Activated CD8-positive, alpha-beta T cell treated with anti-CD3 and anti-CD28 coated beads for 36 hours (primary cell): ENCODE measurements at regions of chr11 and their contacts with region 1.

Region 1: DNA sequence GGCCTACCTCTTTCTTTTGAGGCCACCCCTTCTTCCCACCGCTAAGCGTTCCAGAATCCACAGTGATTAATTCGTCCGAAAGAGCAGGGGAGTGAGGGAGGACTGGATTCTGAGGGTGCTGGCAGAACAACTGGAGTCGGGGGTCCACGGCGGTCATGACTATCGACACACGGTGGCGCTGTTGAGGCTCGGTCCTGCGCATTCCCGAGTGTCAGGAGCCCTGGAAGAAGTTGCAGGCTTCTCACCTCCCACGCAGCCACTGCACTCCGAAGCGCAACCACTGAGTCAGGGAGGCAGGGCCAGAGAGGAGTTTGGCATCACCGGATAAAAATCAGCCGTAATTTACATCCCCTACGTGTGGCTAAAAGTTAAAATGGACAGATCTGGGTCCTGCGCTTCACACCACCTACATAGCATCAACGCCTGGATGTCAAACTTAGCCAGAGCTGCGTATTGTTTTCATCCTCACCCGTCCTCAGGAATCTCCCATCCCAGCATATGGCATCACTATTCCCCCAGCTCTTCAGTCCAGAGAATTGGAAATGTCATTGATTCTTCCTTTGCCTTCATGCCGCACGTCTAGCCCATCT is 10.7 kb upstream of the CTSF start:
- DNase-seq: peak; percentile 90
- ATAC-seq: peak; percentile 91
- H3K4me3 Mint-ChIP-seq: no peak overlapping the region
- H3K27ac Mint-ChIP-seq: no peak overlapping the region
- H3K4me1 Mint-ChIP-seq: peaks cover 16% of the 10 kb centered on the region
- H3K27me3 Mint-ChIP-seq: no peaks in the 10 kb centered on the region
- CTCF ChIP-seq: peak; percentile 90

Region 2: GRCh38 chr11:66429983-66430602 is 149.0 kb before region 1 on chr11:
- CTCF ChIA-PET with region 1: no interaction called
- POLR2A ChIA-PET with region 1: no interaction called
- intact Hi-C with region 1: no loop called
- DNase-seq: peak; percentile 93
- ATAC-seq: peak; percentile 87
- H3K4me3 Mint-ChIP-seq: no peak overlapping the region
- H3K27ac Mint-ChIP-seq: no peak overlapping the region
- H3K4me1 Mint-ChIP-seq: peaks cover 3% of the 10 kb centered on the region
- H3K27me3 Mint-ChIP-seq: no peaks in the 10 kb centered on the region
- CTCF ChIP-seq: peak; percentile 85

Region 3: DNA sequence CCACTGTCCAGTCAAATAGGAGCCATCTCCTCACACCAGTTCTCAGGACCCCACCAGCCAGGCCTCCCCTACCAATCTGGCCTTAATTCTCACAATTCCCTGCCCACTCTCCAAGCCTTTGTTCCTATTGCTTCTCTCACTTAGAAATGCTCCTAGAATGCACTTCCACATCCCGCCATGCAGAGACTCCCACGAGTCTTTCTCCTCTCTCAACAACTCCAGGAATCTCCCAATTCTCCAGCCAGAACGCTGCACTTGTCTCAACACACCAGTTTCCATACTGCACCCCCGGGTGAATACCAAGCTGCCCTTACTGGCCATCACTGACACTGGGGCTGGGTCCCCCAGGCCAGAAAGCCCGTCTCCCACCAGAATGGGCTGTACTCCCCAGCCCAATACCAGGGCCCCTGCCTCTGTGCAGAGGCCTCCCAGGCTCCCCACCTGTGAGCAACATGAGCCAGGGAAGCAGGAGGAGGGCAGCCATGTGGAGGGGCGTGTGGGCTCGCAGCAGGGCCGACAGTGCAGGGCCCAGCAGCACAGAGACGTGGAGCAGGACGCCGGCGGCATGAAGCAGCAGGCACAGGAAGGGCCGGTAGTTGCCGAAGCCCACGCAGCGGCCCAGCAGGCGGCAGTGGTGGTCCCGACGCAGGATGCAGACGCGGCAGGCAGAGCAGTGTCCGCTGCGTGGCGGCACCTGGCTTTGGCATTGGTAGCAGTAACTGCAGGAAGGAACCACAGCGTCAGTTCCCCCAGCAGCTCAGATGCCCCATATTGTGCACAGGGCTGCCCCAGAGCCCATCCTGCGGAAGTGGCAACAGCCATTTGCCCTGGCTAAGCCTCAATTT is 35.6 kb before region 1 on chr11:
- CTCF ChIA-PET with region 1: no interaction called
- POLR2A ChIA-PET with region 1: no interaction called
- intact Hi-C with region 1: no loop called
- DNase-seq: peak; percentile 86
- ATAC-seq: peak; percentile 63
- H3K4me3 Mint-ChIP-seq: peak overlapping the region; percentile 75
- H3K27ac Mint-ChIP-seq: peak overlapping the region; percentile 86
- H3K4me1 Mint-ChIP-seq: peaks cover 17% of the 10 kb centered on the region
- H3K27me3 Mint-ChIP-seq: no peaks in the 10 kb centered on the region
- CTCF ChIP-seq: peak; percentile 64

Region 4: GRCh38 chr11:66568124-66568916 is 10.8 kb before region 1 on chr11 and contains the start of gene CTSF:
- CTCF ChIA-PET with region 1: interaction called, 13 read pairs
- POLR2A ChIA-PET with region 1: no interaction called
- intact Hi-C with region 1: no loop called
- DNase-seq: peak; percentile 73
- ATAC-seq: peak; percentile 92
- H3K4me3 Mint-ChIP-seq: peak within 1 kb of the TSS; percentile 70
- H3K27ac Mint-ChIP-seq: no peak within 1 kb of the TSS
- H3K4me1 Mint-ChIP-seq: peaks cover 2% of the 10 kb centered on the region
- H3K27me3 Mint-ChIP-seq: no peaks in the 10 kb centered on the region
- CTCF ChIP-seq: no peak
- total RNA-seq, gene CTSF: 0.68 to 1.3 TPM

Region 5: DNA sequence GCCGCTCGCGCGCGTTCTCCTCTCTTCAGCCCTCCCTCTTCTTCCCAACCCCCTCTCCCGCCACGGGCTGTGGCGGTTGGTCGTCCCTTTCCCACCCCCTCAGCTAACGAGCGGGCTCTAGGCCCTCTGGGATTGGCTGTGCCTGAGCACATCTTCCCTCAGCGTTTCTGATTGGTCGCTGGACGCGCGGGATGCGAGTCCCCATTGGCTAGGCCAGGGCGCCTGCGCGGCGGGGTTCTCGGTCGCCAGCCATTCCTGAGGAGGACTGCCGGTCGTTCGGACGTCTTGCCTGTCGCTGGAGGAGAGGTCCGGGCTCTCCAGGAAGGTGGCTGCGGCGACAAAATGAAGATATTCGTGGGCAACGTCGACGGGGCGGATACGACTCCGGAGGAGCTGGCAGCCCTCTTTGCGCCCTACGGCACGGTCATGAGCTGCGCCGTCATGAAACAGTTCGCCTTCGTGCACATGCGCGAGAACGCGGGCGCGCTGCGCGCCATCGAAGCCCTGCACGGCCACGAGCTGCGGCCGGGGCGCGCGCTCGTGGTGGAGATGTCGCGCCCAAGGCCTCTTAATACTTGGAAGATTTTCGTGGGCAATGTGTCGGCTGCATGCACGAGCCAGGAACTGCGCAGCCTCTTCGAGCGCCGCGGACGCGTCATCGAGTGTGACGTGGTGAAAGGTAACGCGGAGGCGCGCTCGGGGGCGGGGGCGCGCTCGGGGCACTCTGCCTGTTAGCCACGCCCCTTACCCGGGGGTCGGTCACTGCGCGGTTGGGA is 37.5 kb after region 1 on chr11 and contains the start of gene RBM14:
- CTCF ChIA-PET with region 1: interaction called, 3 read pairs
- POLR2A ChIA-PET with region 1: interaction called, 3 read pairs
- intact Hi-C with region 1: loop called (anchors 5 kb)
- DNase-seq: peak; percentile 99
- ATAC-seq: peak; percentile 96
- H3K4me3 Mint-ChIP-seq: peak within 1 kb of the TSS; percentile 93
- H3K27ac Mint-ChIP-seq: peak within 1 kb of the TSS; percentile 98
- H3K4me1 Mint-ChIP-seq: peaks cover 33% of the 10 kb centered on the region
- H3K27me3 Mint-ChIP-seq: no peaks in the 10 kb centered on the region
- CTCF ChIP-seq: no peak
- total RNA-seq, gene RBM14: 153 to 159 TPM

Region 6: DNA sequence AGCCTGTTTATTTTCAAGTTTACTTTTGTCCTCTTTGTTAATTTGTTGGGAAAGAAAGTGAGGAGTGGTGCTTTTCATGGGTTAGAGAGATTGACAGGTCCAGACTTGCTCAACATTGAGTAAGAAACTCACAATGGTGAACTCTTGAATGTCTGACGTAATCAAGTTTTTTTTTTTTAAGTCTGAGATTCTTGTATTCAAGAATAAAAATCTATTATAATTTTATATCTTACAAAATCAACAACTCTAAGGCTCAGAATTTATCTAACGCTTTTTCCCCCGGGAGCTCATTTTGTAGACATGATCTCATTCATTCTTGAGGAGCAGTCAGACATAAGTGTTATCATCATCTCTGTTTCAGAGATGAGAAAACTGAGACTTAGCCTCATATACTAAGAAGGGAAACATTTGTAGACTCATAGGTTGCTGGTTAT is 189.0 kb after region 1 on chr11:
- CTCF ChIA-PET with region 1: no interaction called
- POLR2A ChIA-PET with region 1: no interaction called
- intact Hi-C with region 1: no loop called
- DNase-seq: no peak
- ATAC-seq: no peak
- H3K4me3 Mint-ChIP-seq: no peak overlapping the region
- H3K27ac Mint-ChIP-seq: peak overlapping the region; percentile 9
- H3K4me1 Mint-ChIP-seq: no peaks in the 10 kb centered on the region
- H3K27me3 Mint-ChIP-seq: no peaks in the 10 kb centered on the region
- CTCF ChIP-seq: no peak